ENCODE measurements at regions of chr3 and their contacts with region 1.

Region 1: GRCh38 chr3:48548729-48549705 is 7.6 kb downstream of the PFKFB4 start:
- DNase-seq: peak; percentile 80 to 87
- H3K4me3 ChIP-seq: no peak overlapping the region
- H3K4me3 Mint-ChIP-seq: no peak overlapping the region
- H3K27ac Mint-ChIP-seq: no peak overlapping the region
- H3K4me1 ChIP-seq: peaks cover 16% of the 10 kb centered on the region
- H3K4me1 Mint-ChIP-seq: peaks cover 11% of the 10 kb centered on the region
- H3K27me3 ChIP-seq: no peaks in the 10 kb centered on the region
- H3K27me3 Mint-ChIP-seq: no peaks in the 10 kb centered on the region
- CTCF ChIP-seq: peak; percentile 86 to 90

Region 2: GRCh38 chr3:48273594-48274211 is 275.3 kb before region 1 on chr3:
- CTCF ChIA-PET with region 1: no interaction called
- POLR2A ChIA-PET with region 1: no interaction called
- intact Hi-C with region 1: loop called (anchors 5 kb)
- DNase-seq: peak; percentile 60 to 77
- H3K4me3 ChIP-seq: no peak overlapping the region
- H3K4me3 Mint-ChIP-seq: no peak overlapping the region
- H3K27ac Mint-ChIP-seq: no peak overlapping the region
- H3K4me1 ChIP-seq: peaks cover 32% of the 10 kb centered on the region
- H3K4me1 Mint-ChIP-seq: peaks cover 35% of the 10 kb centered on the region
- H3K27me3 ChIP-seq: no peaks in the 10 kb centered on the region
- H3K27me3 Mint-ChIP-seq: no peaks in the 10 kb centered on the region
- CTCF ChIP-seq: peak; percentile 79 to 80

Region 3: GRCh38 chr3:48465531-48466378 is 83.3 kb before region 1 on chr3:
- CTCF ChIA-PET with region 1: interaction called, 4 read pairs
- POLR2A ChIA-PET with region 1: interaction called, 4 read pairs
- intact Hi-C with region 1: loop called (anchors 1 kb)
- DNase-seq: peak; percentile 97
- H3K4me3 ChIP-seq: no peak overlapping the region
- H3K4me3 Mint-ChIP-seq: peak overlapping the region; percentile 56
- H3K27ac Mint-ChIP-seq: peak overlapping the region; percentile 99
- H3K4me1 ChIP-seq: peaks cover 19% of the 10 kb centered on the region
- H3K4me1 Mint-ChIP-seq: peaks cover 16% of the 10 kb centered on the region
- H3K27me3 ChIP-seq: no peaks in the 10 kb centered on the region
- H3K27me3 Mint-ChIP-seq: no peaks in the 10 kb centered on the region
- CTCF ChIP-seq: peak; percentile 61 to 83

Region 4: DNA sequence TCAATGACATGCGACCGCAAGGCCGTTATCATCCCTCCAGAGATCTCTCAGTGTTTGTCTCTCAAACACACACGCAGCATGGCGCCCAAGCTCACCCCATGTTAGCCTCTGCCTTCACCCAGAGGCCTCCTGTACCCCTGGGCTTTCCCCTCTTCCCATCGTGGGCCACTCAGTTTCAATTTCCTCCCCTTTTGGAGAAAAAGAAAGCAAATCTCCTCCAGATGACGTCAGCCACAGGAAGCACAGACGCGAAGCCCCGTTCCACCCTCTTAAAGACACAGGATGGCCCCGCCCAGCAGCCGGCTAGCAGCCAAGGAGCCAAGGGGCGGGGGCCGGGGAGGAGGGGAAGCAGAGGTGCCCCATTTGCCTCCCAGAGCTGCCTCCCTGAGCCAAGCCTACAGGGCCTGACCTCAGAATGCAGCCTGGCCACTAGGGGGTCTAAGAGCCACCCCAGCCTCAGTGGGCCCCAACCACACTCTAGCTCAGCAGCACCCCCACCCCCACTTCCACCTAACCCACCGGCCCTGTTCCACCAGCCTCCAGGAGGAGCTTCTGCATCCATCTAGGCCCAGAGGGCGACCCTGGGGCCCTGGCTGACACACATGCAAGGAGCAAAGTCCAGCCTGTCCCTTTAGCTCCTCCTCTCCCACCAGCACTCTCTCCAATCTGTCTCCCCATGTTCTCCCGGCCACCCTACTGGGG is 76.0 kb before region 1 on chr3:
- CTCF ChIA-PET with region 1: interaction called, 23 read pairs
- POLR2A ChIA-PET with region 1: interaction called, 4 read pairs
- intact Hi-C with region 1: loop called (anchors 1 kb)
- DNase-seq: peak; percentile 98 to 99
- H3K4me3 ChIP-seq: peak overlapping the region; percentile 39
- H3K4me3 Mint-ChIP-seq: peak overlapping the region; percentile 88
- H3K27ac Mint-ChIP-seq: peak overlapping the region; percentile 97
- H3K4me1 ChIP-seq: peaks cover 22% of the 10 kb centered on the region; the same call in 1 of the 2 replicates
- H3K4me1 Mint-ChIP-seq: peaks cover 20% of the 10 kb centered on the region
- H3K27me3 ChIP-seq: no peaks in the 10 kb centered on the region
- H3K27me3 Mint-ChIP-seq: no peaks in the 10 kb centered on the region
- CTCF ChIP-seq: peak; percentile 78